Breast epithelium (tissue), 4 donors: ENCODE measurements at regions of chr6 and their contacts with region 1.

Region 1: GRCh38 chr6:166462461-166463135 is 79.9 kb upstream of the MPC1 start:
- DNase-seq: no peak
- H3K4me3 ChIP-seq: no peak overlapping the region
- H3K27ac ChIP-seq: no peak overlapping the region
- H3K4me1 ChIP-seq: no peaks in the 10 kb centered on the region
- H3K27me3 ChIP-seq: no peaks in the 10 kb centered on the region
- CTCF ChIP-seq: no peak
- POLR2A ChIP-seq: no peak

Region 2: GRCh38 chr6:166507809-166508564 is 45.4 kb after region 1 on chr6:
- intact Hi-C with region 1: loop called (anchors 1 kb)
- DNase-seq: no peak
- H3K4me3 ChIP-seq: no peak overlapping the region
- H3K27ac ChIP-seq: no peak overlapping the region
- H3K4me1 ChIP-seq: no peaks in the 10 kb centered on the region
- H3K27me3 ChIP-seq: no peaks in the 10 kb centered on the region
- CTCF ChIP-seq: no peak
- POLR2A ChIP-seq: no peak

Region 3: DNA sequence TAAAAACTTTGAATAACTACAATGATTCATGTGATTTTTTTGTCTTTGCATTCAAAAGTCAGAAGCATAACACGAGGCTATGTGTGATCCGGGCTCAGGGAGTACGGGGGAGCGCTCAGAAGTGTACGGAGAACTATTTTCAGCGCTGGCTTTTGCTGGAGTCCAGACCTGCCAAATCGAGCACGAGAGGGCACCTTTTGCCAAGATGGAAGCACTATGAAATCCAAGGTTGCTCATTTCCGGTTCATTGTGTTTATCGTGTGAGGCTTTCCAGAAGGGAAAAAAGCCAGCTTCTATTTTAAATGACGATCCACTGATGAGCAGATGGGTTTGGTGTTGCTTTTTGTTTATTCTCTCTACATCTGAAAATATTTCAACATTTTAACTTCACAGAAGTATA is 112.6 kb after region 1 on chr6:
- intact Hi-C with region 1: no loop called
- DNase-seq: no peak
- H3K4me3 ChIP-seq: no peak overlapping the region
- H3K27ac ChIP-seq: no peak overlapping the region
- H3K4me1 ChIP-seq: no peaks in the 10 kb centered on the region
- H3K27me3 ChIP-seq: no peaks in the 10 kb centered on the region
- CTCF ChIP-seq: no peak
- POLR2A ChIP-seq: no peak